ENCODE measurements at regions of chr12 and their contacts with region 1.

Region 1: GRCh38 chr12:11648831-11649702 is at the start of gene ETV6:
- DNase-seq: peak; percentile 80
- ATAC-seq: peak; percentile 62
- H3K4me3 Mint-ChIP-seq: peak within 1 kb of the TSS; percentile 98
- H3K27ac Mint-ChIP-seq: peak within 1 kb of the TSS; percentile 98
- H3K4me1 Mint-ChIP-seq: peaks cover 26% of the 10 kb centered on the region
- H3K27me3 Mint-ChIP-seq: no peaks in the 10 kb centered on the region
- total RNA-seq, gene ETV6: 22.5 to 26.0 TPM

Region 2: GRCh38 chr12:10613349-10614055 is 1035.6 kb before region 1 on chr12 and contains the start of gene MAGOHB:
- POLR2A ChIA-PET with region 1: interaction called, 11 read pairs
- DNase-seq: peak; percentile 100
- ATAC-seq: peak; percentile 98
- H3K4me3 Mint-ChIP-seq: peak within 1 kb of the TSS; percentile 99
- H3K27ac Mint-ChIP-seq: peak within 1 kb of the TSS; percentile 99
- H3K4me1 Mint-ChIP-seq: peaks cover 34% of the 10 kb centered on the region
- H3K27me3 Mint-ChIP-seq: no peaks in the 10 kb centered on the region
- total RNA-seq, gene MAGOHB: 40.0 to 41.5 TPM

Region 3: DNA sequence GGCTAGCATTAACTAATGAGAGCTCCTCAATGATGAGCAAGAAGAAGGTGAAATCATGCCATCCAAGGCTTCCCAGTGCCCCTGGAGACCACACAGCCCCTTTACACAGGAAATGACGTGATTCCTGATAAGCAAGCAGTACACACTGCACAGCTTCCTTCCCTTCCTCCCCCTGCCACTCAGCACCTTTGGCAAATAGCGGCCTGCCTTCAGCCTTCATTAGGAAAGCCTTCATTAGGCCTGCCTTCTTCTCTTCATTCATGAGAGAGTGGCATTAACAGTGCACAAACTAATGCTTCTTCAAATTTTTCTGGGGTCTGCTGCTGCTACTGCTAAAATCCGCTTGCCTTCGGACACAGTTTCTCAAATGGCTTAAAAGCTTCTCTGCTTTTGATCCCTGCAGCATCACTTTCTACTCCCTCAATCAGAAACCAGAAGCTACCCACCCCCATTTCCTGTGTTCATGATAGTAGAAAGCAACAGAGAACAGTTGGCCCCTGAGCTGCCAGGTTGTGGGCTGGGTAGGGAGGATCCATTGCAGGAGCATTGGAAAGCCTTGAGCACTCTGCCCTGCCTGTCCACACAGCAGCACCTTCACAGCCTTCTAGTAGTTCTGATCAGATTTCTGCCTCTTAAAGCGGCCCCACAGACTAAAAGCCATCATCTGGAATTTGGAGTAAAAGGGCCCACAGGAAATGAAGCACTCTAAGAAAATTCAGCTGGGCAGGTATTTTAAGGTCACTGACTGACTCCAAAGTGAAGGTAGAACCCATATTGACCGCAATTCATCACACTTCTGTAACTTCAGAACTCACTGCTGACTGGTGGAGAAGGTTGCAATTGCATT is 103.4 kb before region 1 on chr12:
- POLR2A ChIA-PET with region 1: interaction called, 25 read pairs
- DNase-seq: peak; percentile 70
- ATAC-seq: peak; percentile 82
- H3K4me3 Mint-ChIP-seq: peak overlapping the region; percentile 73
- H3K27ac Mint-ChIP-seq: peak overlapping the region; percentile 96
- H3K4me1 Mint-ChIP-seq: peaks cover 44% of the 10 kb centered on the region
- H3K27me3 Mint-ChIP-seq: no peaks in the 10 kb centered on the region

Region 4: DNA sequence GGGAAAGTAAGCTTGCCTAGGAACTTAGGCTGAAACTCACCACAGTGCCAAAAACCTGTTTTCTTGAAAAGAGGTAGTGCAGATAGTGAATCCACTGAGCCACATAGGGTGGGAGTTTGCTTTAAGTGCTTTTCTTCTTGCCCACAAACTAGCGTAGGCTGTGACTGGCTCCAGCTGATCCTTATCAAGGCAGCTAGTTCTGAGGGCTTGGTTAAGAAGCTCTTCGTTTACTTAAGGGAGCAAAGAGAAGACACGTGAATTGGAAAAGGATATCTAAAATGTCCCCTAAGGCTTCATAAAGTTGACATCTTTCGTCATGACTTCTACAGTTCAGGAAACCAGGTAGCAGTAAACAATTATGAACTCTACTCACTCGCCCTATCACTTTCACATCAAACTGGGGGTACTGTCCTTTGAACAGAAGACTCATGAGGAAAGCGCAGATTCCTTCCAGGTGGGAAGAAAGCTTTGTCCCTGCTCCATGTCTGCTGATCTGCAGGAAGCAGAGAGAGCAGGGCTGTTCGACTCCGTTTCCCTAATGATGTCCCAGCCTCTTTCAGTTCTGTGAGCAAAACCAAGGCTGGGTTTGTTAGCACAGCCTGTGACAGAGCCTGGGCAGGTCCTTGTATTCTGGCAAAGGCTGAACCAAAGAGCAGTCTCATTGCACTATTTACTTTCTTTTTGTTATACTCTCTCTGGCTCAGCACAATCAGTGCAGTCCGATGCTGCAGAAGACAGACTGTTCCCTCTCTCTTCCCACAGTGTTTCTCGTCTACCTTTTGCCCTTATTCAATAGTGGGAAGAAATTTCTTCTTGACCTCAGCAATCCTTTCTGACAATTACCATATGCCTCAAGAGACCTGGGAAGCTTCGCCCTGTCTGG is 93.1 kb before region 1 on chr12:
- POLR2A ChIA-PET with region 1: no interaction called
- DNase-seq: no peak
- ATAC-seq: peak; percentile 34
- H3K4me3 Mint-ChIP-seq: peak overlapping the region; percentile 63
- H3K27ac Mint-ChIP-seq: peak overlapping the region; percentile 56
- H3K4me1 Mint-ChIP-seq: peaks cover 21% of the 10 kb centered on the region
- H3K27me3 Mint-ChIP-seq: peaks cover 7% of the 10 kb centered on the region

Region 5: GRCh38 chr12:11746024-11746771 is 97.1 kb after region 1 on chr12:
- POLR2A ChIA-PET with region 1: no interaction called
- DNase-seq: no peak
- ATAC-seq: no peak
- H3K4me3 Mint-ChIP-seq: no peak overlapping the region
- H3K27ac Mint-ChIP-seq: no peak overlapping the region
- H3K4me1 Mint-ChIP-seq: peaks cover 10% of the 10 kb centered on the region
- H3K27me3 Mint-ChIP-seq: no peaks in the 10 kb centered on the region

Measured in activated naive CD8-positive, alpha-beta T cell treated with anti-CD3 and anti-CD28 coated beads, Interleukin-2, amount 10 ng/mL, durations not matched to agents 7 days and 5 days (primary cell).